Endothelial cell of umbilical vein (primary cell): ENCODE measurements at regions of chr11 and their contacts with region 1.

Region 1: GRCh38 chr11:122159173-122159721 is 43.2 kb upstream of the BLID start:
- DNase-seq: peak; percentile 29
- H3K4me3 ChIP-seq: no peak overlapping the region
- H3K27ac ChIP-seq: peak overlapping the region; percentile 82
- H3K4me1 ChIP-seq: peaks cover 68% of the 10 kb centered on the region
- H3K27me3 ChIP-seq: no peaks in the 10 kb centered on the region
- CTCF ChIP-seq: no peak
- POLR2A ChIP-seq: no peak

Region 2: DNA sequence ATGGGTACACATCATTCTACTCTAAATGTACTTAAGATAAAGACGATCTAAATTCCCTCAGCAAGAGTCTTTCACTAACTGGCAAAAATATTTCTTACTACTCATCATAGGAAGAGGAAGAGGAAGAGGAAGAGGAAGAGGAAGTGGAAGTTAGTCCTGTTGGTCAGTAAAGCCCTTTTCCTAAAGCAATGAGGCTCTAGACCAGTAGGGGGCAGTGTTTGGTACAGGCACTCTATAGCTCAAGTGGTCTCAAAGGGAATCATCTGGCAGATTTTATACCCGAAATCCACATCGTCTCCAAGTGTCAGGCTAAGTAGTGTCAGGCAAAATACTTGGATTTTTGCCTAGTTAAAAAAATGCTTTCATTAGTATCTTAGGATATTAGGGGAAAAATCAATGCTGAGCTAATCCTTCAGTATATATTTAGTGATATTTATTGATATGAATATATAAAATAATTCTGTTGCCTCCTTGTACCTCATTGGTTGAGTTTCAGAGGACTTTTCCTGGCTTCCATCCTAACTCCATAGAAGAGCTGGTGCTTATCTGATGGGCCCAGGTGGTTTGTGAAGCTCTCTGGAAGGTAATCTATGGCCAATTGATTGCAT is 51.0 kb before region 1 on chr11:
- CTCF ChIA-PET with region 1: interaction called, 7 read pairs
- POLR2A ChIA-PET with region 1: no interaction called
- dilution Hi-C with region 1: no loop called
- intact Hi-C with region 1: loop called (anchors 2 kb)
- DNase-seq: peak; percentile 55
- H3K4me3 ChIP-seq: no peak overlapping the region
- H3K27ac ChIP-seq: no peak overlapping the region
- H3K4me1 ChIP-seq: peaks cover 21% of the 10 kb centered on the region
- H3K27me3 ChIP-seq: no peaks in the 10 kb centered on the region
- CTCF ChIP-seq: peak; percentile 59 to 68
- POLR2A ChIP-seq: no peak

Region 3: DNA sequence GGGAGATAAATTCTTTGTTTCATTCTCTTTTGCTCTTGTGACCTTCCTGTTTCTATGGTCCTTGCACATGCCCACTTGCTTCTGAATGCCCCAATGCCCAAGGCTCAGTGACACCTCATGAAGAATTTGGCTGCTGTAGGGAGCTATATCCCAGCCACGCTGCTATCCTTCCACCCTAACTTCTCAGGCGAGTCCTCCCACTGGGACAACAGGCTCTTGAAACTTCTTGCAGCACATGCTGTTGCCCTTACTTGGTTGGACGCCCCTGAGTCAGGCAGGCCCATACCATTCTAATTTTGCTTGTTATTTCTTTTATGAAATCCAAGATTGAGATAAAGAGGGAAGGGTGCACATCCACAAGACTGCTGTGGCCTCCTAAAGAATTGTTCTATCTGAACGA is 14.3 kb after region 1 on chr11:
- CTCF ChIA-PET with region 1: interaction called, 4 read pairs
- POLR2A ChIA-PET with region 1: interaction called, 5 read pairs
- dilution Hi-C with region 1: no loop called
- intact Hi-C with region 1: loop called (anchors 1 kb)
- DNase-seq: no peak
- H3K4me3 ChIP-seq: no peak overlapping the region
- H3K27ac ChIP-seq: no peak overlapping the region
- H3K4me1 ChIP-seq: peaks cover 64% of the 10 kb centered on the region
- H3K27me3 ChIP-seq: no peaks in the 10 kb centered on the region
- CTCF ChIP-seq: no peak
- POLR2A ChIP-seq: no peak

Region 4: DNA sequence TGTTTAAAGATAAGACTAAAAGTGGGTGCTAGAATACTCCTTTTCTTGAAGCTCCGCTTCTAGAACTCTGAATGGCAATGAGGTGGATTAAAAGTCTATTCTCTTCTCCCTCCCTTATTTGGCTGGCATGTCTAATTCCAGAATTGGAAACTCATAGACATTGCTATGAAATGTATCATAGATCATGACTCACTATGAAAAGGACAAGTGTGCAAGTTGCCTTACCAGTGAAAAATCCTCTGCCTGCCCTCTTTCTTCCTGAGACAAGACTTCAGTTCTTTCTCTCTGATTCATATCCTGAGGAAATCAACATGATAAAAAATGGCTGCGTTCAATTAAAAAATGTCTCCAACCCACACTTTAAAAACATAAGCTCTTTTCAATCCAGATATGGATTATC is 30.0 kb after region 1 on chr11:
- CTCF ChIA-PET with region 1: no interaction called
- POLR2A ChIA-PET with region 1: no interaction called
- dilution Hi-C with region 1: no loop called
- intact Hi-C with region 1: loop called (anchors 1 kb)
- DNase-seq: peak; percentile 94
- H3K4me3 ChIP-seq: peak overlapping the region in 1 of 3 experiments; percentile 7
- H3K27ac ChIP-seq: peak overlapping the region; percentile 85
- H3K4me1 ChIP-seq: peaks cover 58% of the 10 kb centered on the region
- H3K27me3 ChIP-seq: no peaks in the 10 kb centered on the region
- CTCF ChIP-seq: no peak
- POLR2A ChIP-seq: peak; percentile 57

Region 5: DNA sequence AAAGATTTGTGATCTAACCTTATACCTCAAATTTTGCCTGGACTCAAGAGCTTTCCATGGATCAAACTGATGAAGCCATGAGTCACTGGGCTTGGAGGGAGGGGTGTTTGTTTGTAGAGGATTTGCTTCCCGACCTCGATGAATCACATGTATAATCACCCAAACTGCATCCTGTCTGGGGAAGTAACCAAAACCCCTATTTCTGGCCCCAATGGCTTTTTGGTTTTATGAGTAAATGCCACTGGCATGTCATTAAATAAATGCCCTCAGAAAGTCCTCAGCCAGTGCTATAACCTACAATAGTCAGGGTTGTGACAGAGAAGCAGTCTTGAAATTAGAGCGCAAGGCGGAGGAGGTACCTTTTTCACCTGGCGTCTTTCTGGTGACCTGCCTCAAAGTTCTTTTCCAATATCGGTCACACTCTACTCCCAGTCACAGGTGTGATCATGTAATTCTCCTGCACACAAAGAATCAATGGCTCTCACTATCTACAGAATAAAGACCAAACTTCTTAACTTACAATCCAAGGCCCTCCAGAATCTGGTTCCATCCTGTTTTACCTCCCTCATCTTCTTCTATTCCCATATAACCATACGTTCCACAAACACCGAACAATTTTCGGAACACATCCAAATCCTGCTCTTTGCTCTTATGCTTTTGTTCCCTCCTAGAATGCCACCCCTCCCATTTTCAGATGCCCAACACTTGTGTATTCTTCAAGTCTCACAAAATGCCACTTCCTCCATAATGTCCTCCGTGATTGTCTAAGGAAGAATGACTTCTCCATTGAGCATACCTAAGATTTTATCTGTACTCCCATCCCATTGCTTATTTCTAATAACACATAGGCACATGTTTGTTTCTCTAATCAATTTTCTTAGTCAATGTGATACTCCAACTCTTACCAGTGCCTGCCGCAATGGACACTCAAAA is 38.1 kb after region 1 on chr11:
- CTCF ChIA-PET with region 1: interaction called, 21 read pairs
- POLR2A ChIA-PET with region 1: no interaction called
- dilution Hi-C with region 1: no loop called
- intact Hi-C with region 1: loop called (anchors 1 kb)
- DNase-seq: peak; percentile 96
- H3K4me3 ChIP-seq: peak overlapping the region in 1 of 3 experiments; percentile 26
- H3K27ac ChIP-seq: peak overlapping the region; percentile 95
- H3K4me1 ChIP-seq: peaks cover 69% of the 10 kb centered on the region
- H3K27me3 ChIP-seq: no peaks in the 10 kb centered on the region
- CTCF ChIP-seq: no peak
- POLR2A ChIP-seq: peak; percentile 82